ENCODE measurements at regions of chr3 and their contacts with region 1.

Region 1: DNA sequence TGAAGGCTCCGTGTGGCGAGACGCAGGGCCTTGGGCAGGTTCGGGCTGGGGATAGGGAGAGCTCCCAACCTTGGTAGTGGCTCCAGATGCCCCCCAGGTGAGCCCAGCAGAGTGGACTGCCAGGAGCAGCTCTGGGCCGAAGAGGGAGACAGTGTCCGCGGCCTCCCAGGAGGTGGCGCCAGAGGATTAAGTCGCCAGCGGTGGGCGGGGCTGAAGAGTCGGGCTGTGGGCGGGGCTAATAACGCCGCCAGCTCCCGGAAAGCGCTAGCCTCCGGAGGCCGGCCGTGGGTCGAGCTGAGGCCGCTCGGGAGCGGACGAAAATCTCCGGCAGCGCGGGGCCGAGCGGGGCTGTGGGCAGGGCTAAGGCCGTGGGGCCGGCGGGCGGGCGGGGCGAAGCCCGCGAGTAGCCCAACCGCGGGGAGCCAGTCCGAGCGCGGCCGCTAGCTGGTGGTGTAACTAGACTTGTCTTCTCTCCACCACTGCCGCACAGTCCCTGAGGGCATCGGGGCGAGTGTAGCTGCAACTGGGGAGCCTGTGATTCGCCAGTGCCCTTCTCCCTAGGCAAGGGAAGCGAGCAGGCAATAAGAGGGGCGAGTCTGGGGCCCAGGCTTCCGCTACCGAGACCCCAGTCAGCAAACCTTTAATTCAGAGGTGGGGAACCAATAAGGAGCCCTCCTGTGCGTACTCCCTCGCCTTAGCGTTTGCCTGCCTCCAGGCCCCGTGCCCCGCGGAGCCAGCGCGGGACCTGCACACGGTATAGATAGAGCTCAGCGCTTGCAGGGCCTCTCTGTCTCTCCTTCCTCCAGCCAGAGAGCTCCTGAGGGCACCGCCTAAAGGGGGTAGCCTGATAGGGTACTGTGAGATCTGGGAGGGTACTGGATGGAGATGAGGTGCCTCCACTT is 14.4 kb upstream of the BSN start:
- DNase-seq: peak; percentile 88
- H3K4me3 ChIP-seq: peak overlapping the region; percentile 62
- H3K27ac ChIP-seq: peak overlapping the region; percentile 65
- H3K27me3 ChIP-seq: peaks cover 8% of the 10 kb centered on the region
- CTCF ChIP-seq: peak; percentile 80

Region 2: GRCh38 chr3:49476563-49476962 is 63.3 kb before region 1 on chr3:
- CTCF ChIA-PET with region 1: interaction called, 13 read pairs
- POLR2A ChIA-PET with region 1: interaction called, 3 read pairs
- DNase-seq: no peak
- H3K4me3 ChIP-seq: no peak overlapping the region
- H3K27ac ChIP-seq: no peak overlapping the region
- H3K27me3 ChIP-seq: no peaks in the 10 kb centered on the region
- CTCF ChIP-seq: no peak

Region 3: DNA sequence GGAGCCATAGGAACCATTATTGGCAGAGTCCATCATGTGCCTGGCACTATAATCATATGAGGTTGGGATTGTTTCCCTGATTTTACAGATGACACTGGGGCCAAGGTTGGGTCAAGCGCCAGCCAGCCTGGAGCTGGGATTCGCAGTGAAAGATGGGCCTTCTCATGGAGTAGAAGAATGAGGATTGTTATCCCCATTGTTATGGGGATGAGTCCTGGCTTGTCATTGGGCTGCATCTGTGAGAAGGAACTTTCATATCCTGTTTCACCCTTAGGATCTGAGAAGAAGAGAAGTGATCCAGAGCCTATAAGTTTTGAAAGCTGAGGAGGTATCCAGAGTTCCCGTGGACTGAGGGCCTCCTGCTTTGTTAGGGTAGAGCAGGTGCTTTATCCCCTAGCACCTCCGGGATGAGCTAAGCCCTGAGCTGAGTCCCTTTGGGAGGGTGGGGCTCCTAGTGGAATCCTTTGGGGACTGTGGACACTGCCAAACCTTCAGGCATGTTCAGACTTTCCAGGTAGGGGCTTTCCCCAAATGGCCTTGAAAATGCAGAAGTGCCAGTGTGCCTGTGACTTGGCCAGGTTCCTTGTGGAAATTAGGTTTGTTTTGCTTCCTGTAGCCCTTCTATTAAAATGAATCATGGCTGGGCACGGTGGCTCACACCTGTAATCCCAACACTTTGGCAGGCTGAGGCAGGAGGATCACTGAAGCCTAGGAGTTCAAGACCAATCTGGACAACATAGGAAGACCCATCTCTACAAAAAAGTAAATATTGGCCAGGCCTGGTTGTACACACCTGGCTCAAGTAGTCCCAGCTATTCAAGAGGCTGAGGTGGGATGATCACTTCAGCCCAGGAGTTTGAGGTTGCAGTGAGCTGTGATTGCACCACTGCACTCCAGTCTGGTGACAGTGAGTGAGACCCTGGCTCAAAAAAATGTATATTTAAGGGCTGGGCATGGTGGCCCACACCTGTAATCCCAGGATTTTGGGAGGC is 15.9 kb before region 1 on chr3:
- CTCF ChIA-PET with region 1: interaction called, 38 read pairs
- POLR2A ChIA-PET with region 1: no interaction called
- DNase-seq: no peak
- H3K4me3 ChIP-seq: no peak overlapping the region
- H3K27ac ChIP-seq: peak overlapping the region; percentile 2
- H3K27me3 ChIP-seq: no peaks in the 10 kb centered on the region
- CTCF ChIP-seq: no peak

Region 4: DNA sequence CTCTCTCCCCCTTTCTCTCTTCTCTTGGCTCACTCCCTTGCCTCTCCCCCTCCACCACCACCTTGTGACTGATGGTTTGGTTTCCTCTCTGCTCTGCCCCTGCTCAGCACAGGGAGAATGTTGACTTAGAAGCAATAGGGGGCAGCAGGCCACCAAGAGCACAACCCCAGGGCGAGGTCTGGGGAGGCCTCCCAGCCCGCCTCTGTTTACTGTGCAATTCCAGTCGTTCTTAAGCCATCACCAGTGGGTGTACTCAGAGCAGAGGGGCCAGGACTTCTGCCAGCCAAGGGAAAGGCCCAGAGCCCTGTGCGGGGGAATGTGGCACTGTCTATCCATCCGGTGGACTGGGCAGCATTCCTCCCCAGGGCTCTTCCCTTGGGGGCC is 128.5 kb after region 1 on chr3:
- CTCF ChIA-PET with region 1: interaction called, 208 read pairs
- POLR2A ChIA-PET with region 1: interaction called, 11 read pairs
- DNase-seq: no peak
- H3K4me3 ChIP-seq: no peak overlapping the region
- H3K27ac ChIP-seq: no peak overlapping the region
- H3K27me3 ChIP-seq: peaks cover 14% of the 10 kb centered on the region
- CTCF ChIP-seq: no peak

Region 5: GRCh38 chr3:49703443-49703927 is 163.6 kb after region 1 on chr3:
- CTCF ChIA-PET with region 1: interaction called, 13 read pairs
- POLR2A ChIA-PET with region 1: no interaction called
- DNase-seq: peak; percentile 27
- H3K4me3 ChIP-seq: no peak overlapping the region
- H3K27ac ChIP-seq: no peak overlapping the region
- H3K27me3 ChIP-seq: no peaks in the 10 kb centered on the region
- CTCF ChIP-seq: peak; percentile 85

Region 6: DNA sequence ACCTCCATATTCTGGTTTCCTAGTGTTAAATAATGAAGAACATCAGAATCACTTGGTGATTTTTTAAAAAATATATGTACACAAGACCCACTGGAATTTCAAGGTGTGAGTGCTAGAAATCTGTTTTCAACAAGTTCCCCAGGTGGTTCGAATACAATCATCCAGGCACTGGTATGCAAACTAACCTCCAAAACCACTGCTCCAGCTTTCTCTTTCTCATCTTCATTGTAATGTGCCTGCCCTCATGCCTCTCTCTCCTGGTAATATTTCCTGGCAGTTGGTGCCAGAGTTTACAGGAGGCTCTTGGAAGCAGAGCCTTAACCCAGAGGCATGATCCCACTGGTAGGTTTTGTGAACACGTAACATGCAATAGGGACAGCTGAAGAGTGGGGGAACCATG is 1682.0 kb after region 1 on chr3:
- CTCF ChIA-PET with region 1: no interaction called
- POLR2A ChIA-PET with region 1: no interaction called
- DNase-seq: no peak
- H3K4me3 ChIP-seq: no peak overlapping the region
- H3K27ac ChIP-seq: no peak overlapping the region
- H3K27me3 ChIP-seq: no peaks in the 10 kb centered on the region
- CTCF ChIP-seq: no peak

Measured in AG04450 (cell line).